GM12878 (cell line): ENCODE measurements at regions of chr1 and their contacts with region 1.

Region 1: DNA sequence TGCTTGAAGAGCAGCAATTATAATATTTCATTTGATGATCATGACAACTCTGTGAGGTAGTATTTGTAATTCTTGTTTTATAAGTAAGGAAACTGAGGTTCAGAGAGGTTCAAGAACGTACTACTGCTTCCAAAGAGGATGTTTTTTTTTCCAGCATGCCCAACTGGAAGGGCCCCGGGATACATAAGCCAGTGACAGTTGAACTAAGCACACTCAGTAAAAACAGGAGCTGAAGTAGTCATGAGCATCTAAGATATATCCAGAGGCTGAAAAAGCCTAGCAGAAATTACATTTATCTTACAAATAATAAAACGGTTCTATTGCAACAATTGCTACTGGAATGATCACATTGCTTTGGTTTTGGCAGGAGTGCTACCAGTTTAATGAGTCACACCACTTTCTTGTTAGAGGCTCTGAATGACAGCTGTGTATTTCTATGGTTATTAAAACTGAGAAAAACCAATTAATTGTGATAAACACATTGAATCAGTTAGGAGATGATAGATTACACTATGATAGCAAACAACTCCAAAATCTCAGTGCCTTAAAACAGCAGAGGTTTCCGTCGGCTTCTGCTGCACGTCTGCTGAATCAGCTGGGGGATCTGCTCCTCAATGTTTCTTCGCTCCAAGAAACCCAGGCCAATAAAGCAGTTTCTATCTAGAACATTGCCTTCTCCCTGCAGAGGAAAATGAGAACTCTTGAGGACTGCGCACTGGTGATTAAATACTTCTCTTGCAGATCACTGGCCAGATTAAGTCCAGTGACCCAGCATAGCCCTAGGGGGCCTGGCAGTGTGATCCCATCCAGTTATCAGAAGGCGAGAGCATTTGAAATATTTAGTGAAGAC is 522.7 kb downstream of the PLPP3 start:
- DNase-seq: no peak
- ATAC-seq: no peak; the same call in 2 of the 3 replicates
- H3K4me3 ChIP-seq: no peak overlapping the region
- H3K27ac ChIP-seq: no peak overlapping the region
- H3K4me1 ChIP-seq: peaks cover 2% of the 10 kb centered on the region
- H3K27me3 ChIP-seq: no peaks in the 10 kb centered on the region
- CTCF ChIP-seq: no peak
- EP300 ChIP-seq: no peak
- POLR2A ChIP-seq: no peak
- RAD21 ChIP-seq: no peak

Region 2: DNA sequence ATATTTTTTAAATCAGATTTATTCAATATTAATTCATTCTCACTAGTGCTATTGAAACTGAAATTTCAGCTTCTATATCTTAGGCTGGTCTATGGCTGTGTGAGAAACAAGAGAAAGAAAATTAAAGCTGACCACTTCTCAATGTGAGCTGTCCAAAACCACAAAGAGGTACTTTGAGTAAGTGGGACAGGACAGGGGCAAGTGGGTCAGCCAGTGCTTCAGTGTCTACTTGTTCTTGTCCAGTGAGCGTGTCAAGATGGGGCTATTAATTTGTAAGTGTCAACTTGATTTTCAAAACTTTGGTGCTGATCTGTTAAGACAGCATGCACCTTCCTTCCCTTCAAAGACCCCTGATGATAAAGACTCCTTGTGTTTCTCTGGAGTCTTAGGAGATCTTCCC is 11.2 kb before region 1 on chr1:
- CTCF ChIA-PET with region 1: interaction called, 4 read pairs
- POLR2A ChIA-PET with region 1: no interaction called
- RAD21 ChIA-PET with region 1: interaction called, 7 read pairs
- SMC1A ChIA-PET with region 1: interaction called, 11 read pairs
- in situ Hi-C with region 1: no loop called
- intact Hi-C with region 1: no loop called
- DNase-seq: no peak
- ATAC-seq: peak; percentile 93
- H3K4me3 ChIP-seq: no peak overlapping the region
- H3K27ac ChIP-seq: no peak overlapping the region
- H3K4me1 ChIP-seq: peaks cover 8% of the 10 kb centered on the region
- H3K27me3 ChIP-seq: no peaks in the 10 kb centered on the region
- CTCF ChIP-seq: no peak
- EP300 ChIP-seq: no peak
- POLR2A ChIP-seq: no peak
- RAD21 ChIP-seq: no peak

Region 3: GRCh38 chr1:56068908-56069307 is 12.2 kb after region 1 on chr1:
- CTCF ChIA-PET with region 1: no interaction called
- POLR2A ChIA-PET with region 1: interaction called, 3 read pairs
- RAD21 ChIA-PET with region 1: interaction called, 4 read pairs
- SMC1A ChIA-PET with region 1: interaction called, 11 read pairs
- in situ Hi-C with region 1: no loop called
- intact Hi-C with region 1: no loop called
- DNase-seq: no peak
- ATAC-seq: peak; percentile 75
- H3K4me3 ChIP-seq: no peak overlapping the region
- H3K27ac ChIP-seq: no peak overlapping the region
- H3K4me1 ChIP-seq: no peaks in the 10 kb centered on the region
- H3K27me3 ChIP-seq: no peaks in the 10 kb centered on the region
- CTCF ChIP-seq: no peak
- EP300 ChIP-seq: no peak
- POLR2A ChIP-seq: no peak
- RAD21 ChIP-seq: no peak

Region 4: DNA sequence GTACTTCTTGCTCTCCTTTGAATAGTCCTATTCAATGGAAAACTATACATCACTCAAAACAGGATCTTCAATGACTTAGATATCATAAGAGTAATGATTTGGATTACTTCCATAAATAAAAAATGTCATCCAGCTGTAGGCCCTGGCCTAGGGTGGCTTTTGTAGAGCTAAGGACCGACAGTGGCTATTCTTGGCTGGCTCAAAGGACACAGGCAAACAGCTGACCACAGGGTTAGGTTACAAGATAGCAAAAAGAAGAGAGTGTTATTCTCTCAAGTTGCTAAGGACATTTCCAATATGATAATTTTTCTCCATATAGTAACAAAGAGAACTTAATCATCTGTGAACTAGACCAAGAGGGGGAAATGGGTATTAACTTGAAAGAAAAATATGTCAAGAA is 27.6 kb after region 1 on chr1:
- CTCF ChIA-PET with region 1: no interaction called
- POLR2A ChIA-PET with region 1: no interaction called
- RAD21 ChIA-PET with region 1: no interaction called
- SMC1A ChIA-PET with region 1: interaction called, 10 read pairs
- in situ Hi-C with region 1: no loop called
- intact Hi-C with region 1: no loop called
- DNase-seq: no peak
- ATAC-seq: no peak
- H3K4me3 ChIP-seq: no peak overlapping the region
- H3K27ac ChIP-seq: no peak overlapping the region
- H3K4me1 ChIP-seq: no peaks in the 10 kb centered on the region
- H3K27me3 ChIP-seq: no peaks in the 10 kb centered on the region
- CTCF ChIP-seq: no peak
- EP300 ChIP-seq: no peak
- POLR2A ChIP-seq: no peak
- RAD21 ChIP-seq: no peak